PC-3 (cell line): ENCODE measurements at regions of chr10 and their contacts with region 1.

Region 1: DNA sequence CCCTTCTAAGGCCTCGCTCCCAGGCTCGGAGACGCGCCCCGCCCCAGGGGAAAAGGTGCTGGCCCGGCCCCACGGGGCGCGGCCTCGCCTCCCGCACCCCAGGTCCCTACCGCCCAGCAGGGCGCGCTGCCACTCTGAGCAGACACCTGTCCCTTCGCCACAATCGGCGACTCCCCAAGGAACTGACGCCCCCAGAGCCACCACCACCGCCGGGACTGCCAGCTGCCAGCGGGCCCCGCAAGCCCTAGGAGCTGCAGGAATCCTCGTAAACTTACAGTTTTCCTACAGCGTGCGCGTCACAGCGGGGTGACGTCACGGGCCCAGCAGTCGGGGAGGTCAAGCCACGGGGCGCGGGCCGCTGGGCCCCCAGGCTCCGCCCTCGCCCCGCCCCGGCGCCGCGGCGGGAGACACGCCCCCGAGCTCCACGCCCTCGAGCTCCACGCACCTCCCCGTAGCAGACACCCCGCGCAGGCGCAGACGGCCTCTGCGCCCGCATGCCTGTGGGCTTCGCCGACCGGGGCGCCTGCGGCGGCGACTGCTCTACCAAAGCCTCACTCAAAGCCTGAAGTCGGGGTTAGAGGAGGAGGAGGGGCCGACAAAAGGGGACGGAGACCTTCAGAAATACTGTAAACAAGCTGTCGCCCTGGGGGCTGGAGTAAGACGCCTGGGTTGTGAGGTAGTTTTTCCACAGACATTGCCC is at the start of gene ZNF438:
- DNase-seq: peak; percentile 91
- ATAC-seq: peak; percentile 73
- H3K4me3 ChIP-seq: peak within 1 kb of the TSS; percentile 72
- H3K27ac ChIP-seq: peak within 1 kb of the TSS; percentile 95
- H3K4me1 ChIP-seq: peaks cover 28% of the 10 kb centered on the region
- H3K27me3 ChIP-seq: no peaks in the 10 kb centered on the region
- CTCF ChIP-seq: peak; percentile 56
- total RNA-seq, gene ZNF438: 0.98 and 2.4 TPM in 2 replicates

Region 2: GRCh38 chr10:30751678-30752331 is 279.9 kb before region 1 on chr10:
- CTCF ChIA-PET with region 1: no interaction called
- POLR2A ChIA-PET with region 1: no interaction called
- intact Hi-C with region 1: loop called (anchors 5 kb)
- DNase-seq: peak; percentile 78
- ATAC-seq: peak; percentile 94
- H3K4me3 ChIP-seq: no peak overlapping the region
- H3K27ac ChIP-seq: no peak overlapping the region
- H3K4me1 ChIP-seq: no peaks in the 10 kb centered on the region
- H3K27me3 ChIP-seq: no peaks in the 10 kb centered on the region
- CTCF ChIP-seq: peak; percentile 91

Region 3: DNA sequence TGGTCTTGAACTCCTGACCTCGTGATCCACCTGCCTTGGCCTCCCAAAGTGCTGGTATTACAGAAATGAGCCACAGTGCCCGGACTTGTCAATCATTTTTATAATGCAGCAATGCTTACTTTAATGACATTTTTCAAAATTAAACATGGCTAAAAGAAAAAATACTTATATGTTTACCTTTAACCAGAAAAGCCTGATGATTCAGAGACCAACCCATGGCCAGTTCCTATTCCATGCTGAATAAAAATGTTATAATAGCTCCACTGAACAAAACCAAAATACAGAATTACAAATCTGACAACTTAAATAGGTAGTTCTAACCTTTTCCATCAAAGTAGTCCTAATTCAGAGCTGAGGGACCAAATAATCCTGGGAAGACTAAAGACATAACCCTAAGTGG is 21.6 kb before region 1 on chr10:
- CTCF ChIA-PET with region 1: no interaction called
- POLR2A ChIA-PET with region 1: interaction called, 12 read pairs
- intact Hi-C with region 1: no loop called
- DNase-seq: peak; percentile 59
- ATAC-seq: peak; percentile 58
- H3K4me3 ChIP-seq: no peak overlapping the region
- H3K27ac ChIP-seq: peak overlapping the region; percentile 37
- H3K4me1 ChIP-seq: peaks cover 54% of the 10 kb centered on the region
- H3K27me3 ChIP-seq: no peaks in the 10 kb centered on the region
- CTCF ChIP-seq: no peak

Region 4: GRCh38 chr10:31051703-31052102 is 20.0 kb after region 1 on chr10:
- CTCF ChIA-PET with region 1: no interaction called
- POLR2A ChIA-PET with region 1: interaction called, 21 read pairs
- intact Hi-C with region 1: no loop called
- DNase-seq: peak; percentile 55
- ATAC-seq: peak; percentile 54
- H3K4me3 ChIP-seq: no peak overlapping the region
- H3K27ac ChIP-seq: no peak overlapping the region
- H3K4me1 ChIP-seq: peaks cover 7% of the 10 kb centered on the region
- H3K27me3 ChIP-seq: no peaks in the 10 kb centered on the region
- CTCF ChIP-seq: no peak

Region 5: DNA sequence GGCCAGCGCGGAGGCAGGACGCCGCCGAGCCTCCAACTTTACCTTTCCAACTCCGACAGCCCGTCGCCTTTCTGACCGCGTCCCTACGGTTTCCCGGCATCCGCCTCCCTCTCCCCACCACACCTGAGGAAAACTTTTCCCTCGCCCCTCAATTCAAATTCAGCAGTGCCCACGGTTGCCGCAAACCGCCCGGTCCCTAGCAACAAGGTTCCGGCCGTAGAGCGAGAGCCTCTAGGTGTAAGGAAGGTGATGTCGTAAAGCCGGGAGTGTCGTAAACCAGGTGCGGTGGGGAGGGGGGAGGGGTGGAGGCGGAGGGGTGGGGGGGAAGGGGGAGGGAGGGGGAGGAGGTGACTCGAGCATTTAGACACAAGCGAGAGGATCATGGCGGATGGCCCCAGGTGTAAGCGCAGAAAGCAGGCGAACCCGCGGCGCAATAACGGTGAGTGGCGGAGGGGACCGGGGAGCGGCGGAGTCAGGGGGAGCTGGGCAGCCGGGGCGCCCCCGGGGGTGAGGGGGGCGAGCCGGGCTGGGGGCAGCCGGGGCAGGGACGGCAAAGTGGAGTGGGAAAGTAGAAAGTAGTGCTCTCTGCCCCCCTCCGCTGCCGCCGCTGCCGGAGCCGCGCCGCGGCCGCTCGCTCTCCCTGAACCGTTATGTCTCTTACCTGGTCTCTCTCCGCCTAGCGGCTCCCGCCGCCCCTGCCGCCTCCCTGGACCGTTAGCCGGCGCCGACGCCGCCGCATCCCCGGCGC is 287.3 kb after region 1 on chr10 and contains the start of gene ZEB1:
- CTCF ChIA-PET with region 1: no interaction called
- POLR2A ChIA-PET with region 1: interaction called, 5 read pairs
- intact Hi-C with region 1: loop called (anchors 2 kb)
- DNase-seq: peak; percentile 78
- ATAC-seq: peak; percentile 50
- H3K4me3 ChIP-seq: peak within 1 kb of the TSS; percentile 96
- H3K27ac ChIP-seq: peak within 1 kb of the TSS; percentile 94
- H3K4me1 ChIP-seq: peaks cover 34% of the 10 kb centered on the region
- H3K27me3 ChIP-seq: no peaks in the 10 kb centered on the region
- CTCF ChIP-seq: no peak
- total RNA-seq, gene ZEB1: 3.9 and 10.7 TPM in 2 replicates

Region 6: GRCh38 chr10:31490858-31491504 is 459.3 kb after region 1 on chr10:
- CTCF ChIA-PET with region 1: no interaction called
- POLR2A ChIA-PET with region 1: interaction called, 11 read pairs
- intact Hi-C with region 1: no loop called
- DNase-seq: peak; percentile 67
- ATAC-seq: 0 out of 2 replicates have a peak, but pooled peaks have one; percentile 46
- H3K4me3 ChIP-seq: no peak overlapping the region
- H3K27ac ChIP-seq: no peak overlapping the region
- H3K4me1 ChIP-seq: no peaks in the 10 kb centered on the region
- H3K27me3 ChIP-seq: no peaks in the 10 kb centered on the region
- CTCF ChIP-seq: peak; percentile 73